Spleen (tissue), 13 donors: ENCODE measurements at regions of chr9 and their contacts with region 1.

Region 1: DNA sequence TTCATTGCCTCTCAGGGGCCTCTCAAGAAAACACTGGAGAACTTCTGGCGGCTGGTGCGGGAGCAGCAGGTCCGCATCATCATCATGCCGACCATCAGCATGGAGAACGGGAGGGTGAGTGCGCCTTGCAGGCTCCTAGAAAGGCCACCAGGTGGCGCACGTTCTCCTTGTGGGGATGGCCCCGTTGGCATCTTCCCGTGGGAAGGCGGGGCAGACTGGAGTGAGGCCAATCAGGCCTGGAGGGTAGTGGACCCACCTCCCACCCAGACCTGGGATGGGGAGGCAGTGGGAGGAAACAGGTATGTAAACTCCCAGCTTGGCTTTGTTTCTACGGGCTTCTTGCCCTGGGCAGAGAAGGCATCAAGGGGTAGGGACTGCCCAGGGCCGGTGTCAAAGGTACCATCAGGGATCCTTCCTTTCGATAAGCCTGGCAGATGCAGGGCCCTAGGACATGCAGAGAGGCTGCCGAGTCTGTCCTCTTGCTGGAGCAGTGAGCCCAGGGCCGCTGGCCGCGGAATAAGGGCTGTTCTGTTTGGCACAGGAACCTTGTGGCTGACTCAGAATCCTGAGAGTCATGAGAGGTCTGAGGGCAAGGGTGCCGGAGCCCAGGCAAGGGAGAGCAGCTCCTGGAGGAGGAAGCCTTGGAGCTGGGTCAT is 18.9 kb upstream of the SPTLC1 start:
- DNase-seq: peak; percentile 94
- H3K4me3 ChIP-seq: peak overlapping the region in 2 of 8 donors; percentile 13 to 36
- H3K27ac ChIP-seq: peak overlapping the region in 1 of 8 donors; percentile 0
- H3K4me1 ChIP-seq: peaks cover 4 to 18% (median 14%) of the 10 kb centered on the region in 6 donors
- H3K27me3 ChIP-seq: peaks cover 0 to 61% (median 0%) of the 10 kb centered on the region in 7 donors
- CTCF ChIP-seq: peak; percentile 55 to 98 (median 91)
- POLR2A ChIP-seq: no peak

Region 2: DNA sequence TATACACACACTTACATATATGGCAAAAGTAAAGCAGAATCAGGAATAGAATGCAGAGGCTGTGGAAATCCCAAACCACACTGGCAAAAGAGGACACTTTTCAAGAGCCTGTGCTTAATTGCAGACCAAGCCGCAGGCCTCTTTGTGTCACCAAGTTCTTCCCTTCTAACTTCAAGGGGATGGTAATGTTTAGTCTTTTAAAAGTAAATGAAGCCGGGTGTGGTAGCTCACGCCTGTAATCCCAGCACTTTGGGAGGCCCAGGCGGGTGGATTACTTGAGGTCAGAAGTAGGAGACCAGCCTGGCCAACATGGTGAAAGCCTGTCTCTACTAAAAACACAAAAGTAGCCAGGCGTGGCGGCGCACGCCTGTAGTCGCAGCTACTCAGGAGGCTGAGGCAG is 212.7 kb before region 1 on chr9:
- intact Hi-C with region 1: no loop called
- DNase-seq: no peak
- H3K4me3 ChIP-seq: no peak overlapping the region
- H3K27ac ChIP-seq: no peak overlapping the region
- H3K4me1 ChIP-seq: no peaks in the 10 kb centered on the region
- H3K27me3 ChIP-seq: peaks cover 0 to 29% (median 0%) of the 10 kb centered on the region in 7 donors
- CTCF ChIP-seq: no peak
- POLR2A ChIP-seq: no peak

Region 3: GRCh38 chr9:92293452-92294296 is 159.6 kb after region 1 on chr9 and contains the start of gene IARS1:
- intact Hi-C with region 1: loop called (anchors 10 kb)
- DNase-seq: peak; percentile 98
- H3K4me3 ChIP-seq: peak within 1 kb of the TSS; percentile 61 to 85 (median 76)
- H3K27ac ChIP-seq: peak within 1 kb of the TSS; percentile 66 to 91 (median 86)
- H3K4me1 ChIP-seq: peaks cover 21 to 74% (median 37%) of the 10 kb centered on the region in 6 donors
- H3K27me3 ChIP-seq: no peaks in the 10 kb centered on the region
- CTCF ChIP-seq: peak in 6 of 11 experiments; percentile 30 to 59 (median 38)
- POLR2A ChIP-seq: peak in 1 of 3 donors; percentile 80
- total RNA-seq, gene IARS1: 58.3 to 110 (median 71.5) TPM

Region 4: DNA sequence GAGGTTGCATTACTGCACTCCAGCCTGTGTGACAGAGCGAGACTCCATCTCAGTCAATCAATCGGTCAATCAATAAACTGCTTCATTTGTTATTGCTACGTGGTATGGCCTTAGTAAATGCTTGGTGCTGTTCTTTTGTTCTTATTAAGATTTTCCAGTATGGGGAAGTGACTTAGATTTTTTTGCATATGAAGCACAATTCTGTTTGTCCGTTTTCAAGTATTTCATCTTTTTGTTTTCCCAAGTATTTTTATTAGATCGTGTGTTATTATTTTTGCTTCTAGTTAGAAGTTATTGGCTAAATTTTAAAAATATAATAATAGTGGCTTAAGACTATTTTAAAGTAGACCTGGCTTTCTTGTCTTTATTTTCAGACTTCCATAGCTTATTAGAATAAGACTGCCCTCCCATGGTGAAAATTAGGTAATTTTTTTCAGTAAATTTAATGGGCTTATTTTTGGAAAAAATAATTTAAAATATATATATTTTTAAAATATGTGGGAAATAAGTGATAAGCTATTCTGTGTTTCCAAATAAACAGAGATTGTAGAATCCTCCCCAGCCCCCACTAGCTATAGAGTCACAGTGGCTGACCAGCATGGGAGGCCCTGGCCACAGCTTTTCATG is 304.9 kb after region 1 on chr9:
- intact Hi-C with region 1: loop called (anchors 10 kb)
- DNase-seq: no peak
- H3K4me3 ChIP-seq: no peak overlapping the region
- H3K27ac ChIP-seq: no peak overlapping the region
- H3K4me1 ChIP-seq: peaks cover 0 to 7% (median 0%) of the 10 kb centered on the region in 6 donors
- H3K27me3 ChIP-seq: no peaks in the 10 kb centered on the region
- CTCF ChIP-seq: peak in 4 of 11 experiments; percentile 12 to 32 (median 20)
- POLR2A ChIP-seq: no peak

Region 5: GRCh38 chr9:92790542-92791527 is 656.8 kb after region 1 on chr9:
- intact Hi-C with region 1: loop called (anchors 10 kb)
- DNase-seq: no peak
- H3K4me3 ChIP-seq: no peak overlapping the region
- H3K27ac ChIP-seq: no peak overlapping the region
- H3K4me1 ChIP-seq: peaks cover 0 to 11% (median 5%) of the 10 kb centered on the region in 6 donors
- H3K27me3 ChIP-seq: no peaks in the 10 kb centered on the region
- CTCF ChIP-seq: peak; percentile 77 to 95 (median 87)
- POLR2A ChIP-seq: no peak